PC-9 (cell line): ENCODE measurements at regions of chr19 and their contacts with region 1.

Region 1: DNA sequence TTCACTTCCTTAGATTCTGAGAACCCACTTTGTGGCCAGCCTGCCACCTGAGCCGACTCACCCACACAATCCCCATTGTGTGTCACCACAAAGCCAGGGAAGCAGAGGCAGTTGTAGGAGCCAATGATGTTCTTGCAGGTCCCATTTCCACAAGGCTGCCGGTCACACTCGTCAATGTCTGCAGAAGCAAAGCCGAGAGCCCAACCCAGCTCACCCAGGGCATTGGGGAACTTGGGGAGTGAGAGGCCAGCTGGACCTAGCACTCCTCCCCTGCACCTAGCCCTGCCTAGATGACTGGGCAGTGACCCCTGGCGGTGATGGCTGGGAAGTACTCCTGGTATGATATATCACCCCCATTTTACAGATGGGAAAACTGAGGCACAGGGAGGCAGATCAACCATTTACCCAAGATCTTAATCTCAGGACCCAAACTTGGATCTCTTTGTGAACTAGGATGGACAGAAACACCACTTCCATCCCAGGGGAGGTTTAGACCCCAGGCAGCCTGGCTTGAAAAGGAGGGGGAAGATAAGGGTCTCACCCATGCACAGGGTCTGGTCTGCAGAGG is 43.4 kb downstream of the CCL25 start:
- DNase-seq: no peak
- H3K4me3 ChIP-seq: no peak overlapping the region
- H3K27ac ChIP-seq: no peak overlapping the region
- H3K4me1 ChIP-seq: no peaks in the 10 kb centered on the region
- H3K27me3 ChIP-seq: peaks cover 21% of the 10 kb centered on the region; the same call in 1 of the 2 replicates
- CTCF ChIP-seq: peak; percentile 58

Region 2: DNA sequence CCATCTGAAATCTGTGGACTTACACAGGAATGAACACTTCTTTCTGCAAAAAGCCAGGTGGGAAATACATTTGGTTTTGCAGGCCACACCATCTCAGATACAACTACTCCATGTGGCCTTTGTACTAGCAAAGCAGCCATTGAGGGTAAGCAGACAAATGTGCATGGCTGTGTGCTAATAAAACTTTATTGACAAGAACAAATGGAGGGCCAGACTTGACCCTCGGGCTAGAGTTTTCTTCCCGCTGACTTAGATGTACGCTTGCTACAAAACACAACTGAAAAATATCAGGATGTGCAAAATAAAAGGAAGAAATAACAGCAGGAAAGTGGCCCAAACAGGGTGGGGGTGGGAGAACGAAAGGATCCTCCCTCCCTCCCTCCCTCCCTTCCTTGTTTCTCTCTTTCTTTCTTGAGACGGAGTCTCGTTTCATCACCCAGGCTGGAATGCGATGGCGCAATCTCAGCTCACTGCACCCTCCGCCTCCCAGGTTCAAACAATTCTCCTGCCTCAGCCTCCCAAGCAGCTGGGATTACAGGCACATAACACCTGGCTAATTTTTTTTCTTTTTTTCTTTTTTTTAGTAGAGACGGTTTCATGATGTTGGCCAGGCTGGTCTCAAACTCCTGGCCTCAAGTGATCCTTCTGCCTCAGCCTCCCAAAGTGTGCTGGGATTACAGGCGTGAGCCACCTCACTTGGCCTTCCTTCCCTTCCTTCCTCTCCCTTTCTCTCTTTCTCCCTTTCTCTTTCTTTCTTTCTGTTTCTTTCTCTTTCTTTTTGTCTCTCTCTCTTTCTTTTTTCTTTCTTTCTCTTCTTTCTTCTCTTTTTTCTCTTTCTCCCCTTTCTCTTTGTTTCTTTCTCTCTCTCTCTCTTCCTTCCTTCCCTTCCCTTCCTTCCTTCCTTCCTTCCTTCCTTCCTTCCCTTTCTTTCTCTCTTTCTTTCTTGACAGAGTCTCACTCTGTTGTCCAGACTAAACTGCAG is 14.1 kb before region 1 on chr19:
- CTCF ChIA-PET with region 1: no interaction called
- POLR2A ChIA-PET with region 1: interaction called, 37 read pairs
- intact Hi-C with region 1: no loop called
- DNase-seq: peak in 1 of 2 experiments; percentile 24
- H3K4me3 ChIP-seq: no peak overlapping the region
- H3K27ac ChIP-seq: no peak overlapping the region
- H3K4me1 ChIP-seq: peaks cover 10% of the 10 kb centered on the region; the same call in 1 of the 2 replicates
- H3K27me3 ChIP-seq: peaks cover 5% of the 10 kb centered on the region; the same call in 1 of the 2 replicates
- CTCF ChIP-seq: no peak

Region 3: DNA sequence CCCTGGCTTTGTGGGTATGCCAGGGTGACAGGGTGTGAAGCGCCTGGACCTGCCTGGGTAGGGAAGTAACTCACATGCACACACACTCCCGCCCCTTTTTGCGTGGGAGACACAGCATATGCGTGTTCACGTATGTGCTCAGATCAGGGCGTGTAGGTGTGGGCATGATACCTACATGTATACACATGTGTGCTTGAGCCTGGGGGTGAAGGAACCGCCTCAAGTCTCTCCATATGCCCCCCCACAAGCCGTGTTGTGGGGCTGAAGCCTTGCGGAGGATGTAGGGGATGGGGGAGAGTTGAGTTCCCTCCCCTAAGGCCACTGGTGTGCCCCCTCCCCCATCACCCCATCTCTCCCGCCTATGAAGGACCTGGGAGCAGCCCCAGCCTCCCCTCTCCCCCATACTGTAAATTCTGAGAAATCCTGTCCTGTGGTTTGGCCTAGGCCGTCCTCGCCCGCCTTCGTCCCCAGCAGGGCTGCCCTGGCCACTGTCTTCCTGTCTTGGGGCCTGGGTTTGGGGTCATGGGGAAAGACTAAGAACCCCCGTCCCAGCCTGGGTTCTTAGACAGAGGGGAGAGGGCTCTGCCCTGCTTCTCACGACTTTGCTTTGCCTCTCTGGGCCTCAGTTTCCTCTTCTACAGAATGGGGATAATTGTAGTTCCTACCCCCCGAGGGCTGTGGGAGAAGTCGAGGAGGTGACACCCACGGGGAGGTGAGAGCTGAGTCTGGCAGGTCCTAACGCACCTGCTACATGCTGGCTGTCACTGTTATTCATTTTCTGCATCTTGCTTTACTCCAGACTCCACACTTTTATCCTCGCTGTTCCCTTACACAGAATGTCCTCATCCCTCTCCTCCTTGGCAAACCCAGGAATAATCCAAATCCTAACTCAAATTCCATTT is 588.3 kb after region 1 on chr19:
- CTCF ChIA-PET with region 1: interaction called, 20 read pairs
- POLR2A ChIA-PET with region 1: no interaction called
- intact Hi-C with region 1: no loop called
- DNase-seq: no peak
- H3K4me3 ChIP-seq: no peak overlapping the region
- H3K27ac ChIP-seq: no peak overlapping the region
- H3K4me1 ChIP-seq: no peaks in the 10 kb centered on the region
- H3K27me3 ChIP-seq: peaks cover 21% of the 10 kb centered on the region; the same call in 1 of the 2 replicates
- CTCF ChIP-seq: no peak